Mammary epithelial cell (primary cell): ENCODE measurements at regions of chr3 and their contacts with region 1.

Region 1: DNA sequence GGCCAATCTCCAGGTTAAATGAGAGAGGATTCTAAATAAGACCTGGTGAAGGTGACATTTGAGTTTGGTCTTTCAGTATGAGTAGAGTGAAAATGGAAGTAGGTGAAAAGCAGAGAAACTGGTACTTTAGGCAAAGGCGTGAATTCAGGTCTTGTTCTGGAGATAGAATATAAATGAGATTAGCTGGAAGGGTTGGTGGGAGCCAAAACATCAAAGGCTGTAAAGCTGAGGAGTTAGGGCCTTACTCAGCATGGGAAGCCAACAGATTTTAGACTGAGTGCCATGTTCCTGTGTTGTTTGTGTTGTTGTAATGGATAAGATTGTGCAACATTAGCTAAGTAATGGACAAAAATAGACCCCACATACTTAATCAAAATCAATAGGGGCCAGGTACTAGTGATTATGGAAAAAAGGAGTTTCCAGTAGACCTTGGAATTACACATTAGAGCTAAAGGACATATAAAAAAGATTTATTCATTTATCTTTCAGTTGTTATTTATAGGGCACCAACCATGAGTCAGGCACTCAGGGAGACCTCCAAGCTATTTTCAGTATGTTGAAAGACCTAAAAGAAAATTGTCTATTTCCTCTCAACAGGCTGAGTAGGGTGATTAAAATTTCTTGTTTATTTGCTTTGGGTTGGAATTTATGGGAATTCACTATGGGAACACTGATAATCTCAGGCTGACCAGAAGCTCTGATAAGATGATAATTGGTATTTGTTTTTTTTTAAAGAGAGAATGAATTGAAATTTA is 20.8 kb downstream of the ARL14 start:
- DNase-seq: no peak
- H3K4me3 ChIP-seq: no peak overlapping the region
- H3K27ac ChIP-seq: no peak overlapping the region
- H3K4me1 ChIP-seq: no peaks in the 10 kb centered on the region
- H3K27me3 ChIP-seq: no peaks in the 10 kb centered on the region
- CTCF ChIP-seq: no peak

Region 2: GRCh38 chr3:160622263-160623045 is 75.4 kb before region 1 on chr3:
- CTCF ChIA-PET with region 1: interaction called, 34 read pairs
- dilution Hi-C with region 1: no loop called
- in situ Hi-C with region 1: no loop called
- intact Hi-C with region 1: no loop called
- DNase-seq: no peak
- H3K4me3 ChIP-seq: no peak overlapping the region
- H3K27ac ChIP-seq: no peak overlapping the region
- H3K4me1 ChIP-seq: peaks cover under 1% of the 10 kb centered on the region
- H3K27me3 ChIP-seq: no peaks in the 10 kb centered on the region
- CTCF ChIP-seq: no peak

Region 3: GRCh38 chr3:160771811-160772459 is 74.1 kb after region 1 on chr3:
- CTCF ChIA-PET with region 1: no interaction called
- dilution Hi-C with region 1: no loop called
- in situ Hi-C with region 1: no loop called
- intact Hi-C with region 1: no loop called
- DNase-seq: no peak
- H3K4me3 ChIP-seq: no peak overlapping the region
- H3K27ac ChIP-seq: no peak overlapping the region
- H3K4me1 ChIP-seq: no peaks in the 10 kb centered on the region
- H3K27me3 ChIP-seq: no peaks in the 10 kb centered on the region
- CTCF ChIP-seq: no peak